Naive thymus-derived CD4-positive, alpha-beta T cell (primary cell): ENCODE measurements at regions of chrX and their contacts with region 1.

Region 1: GRCh38 chrX:119502727-119503483 is 34.7 kb downstream of the SLC25A5 start:
- DNase-seq: peak in 7 of 9 donors; percentile 17 to 70 (median 58)
- ATAC-seq: peak; percentile 85
- H3K4me3 ChIP-seq: no peak overlapping the region
- H3K4me3 Mint-ChIP-seq: peak overlapping the region in 8 of 10 donors; percentile 51 to 77 (median 71)
- H3K27ac ChIP-seq: peak overlapping the region; percentile 50
- H3K27ac Mint-ChIP-seq: peak overlapping the region; percentile 69 to 97 (median 87)
- H3K4me1 ChIP-seq: peaks cover 0 to 20% of the 10 kb centered on the region in 2 donors
- H3K4me1 Mint-ChIP-seq: peaks cover 6 to 24% (median 14%) of the 10 kb centered on the region in 7 donors
- H3K27me3 ChIP-seq: no peaks in the 10 kb centered on the region
- H3K27me3 Mint-ChIP-seq: no peaks in the 10 kb centered on the region

Region 2: GRCh38 chrX:119105826-119106225 is 397.1 kb before region 1 on chrX:
- CTCF ChIA-PET with region 1: no interaction called
- POLR2A ChIA-PET with region 1: no interaction called
- intact Hi-C with region 1: no loop called
- DNase-seq: no peak
- ATAC-seq: no peak
- H3K4me3 ChIP-seq: no peak overlapping the region
- H3K4me3 Mint-ChIP-seq: no peak overlapping the region
- H3K27ac ChIP-seq: no peak overlapping the region
- H3K27ac Mint-ChIP-seq: no peak overlapping the region
- H3K4me1 ChIP-seq: no peaks in the 10 kb centered on the region
- H3K4me1 Mint-ChIP-seq: no peaks in the 10 kb centered on the region
- H3K27me3 ChIP-seq: no peaks in the 10 kb centered on the region
- H3K27me3 Mint-ChIP-seq: peaks cover 0 to 10% (median 0%) of the 10 kb centered on the region in 5 donors

Region 3: GRCh38 chrX:119488749-119489148 is 14.2 kb before region 1 on chrX:
- CTCF ChIA-PET with region 1: interaction called, 3 read pairs
- POLR2A ChIA-PET with region 1: interaction called, 6 read pairs
- intact Hi-C with region 1: loop called in 1 of 2 experiments (anchors 1 kb)
- DNase-seq: peak in 5 of 9 donors; percentile 14 to 41 (median 36)
- ATAC-seq: peak; percentile 54
- H3K4me3 ChIP-seq: no peak overlapping the region
- H3K4me3 Mint-ChIP-seq: no peak overlapping the region
- H3K27ac ChIP-seq: no peak overlapping the region
- H3K27ac Mint-ChIP-seq: no peak overlapping the region
- H3K4me1 ChIP-seq: no peaks in the 10 kb centered on the region
- H3K4me1 Mint-ChIP-seq: peaks cover 0 to 7% (median 0%) of the 10 kb centered on the region in 7 donors
- H3K27me3 ChIP-seq: no peaks in the 10 kb centered on the region
- H3K27me3 Mint-ChIP-seq: no peaks in the 10 kb centered on the region